OCI-LY7 (cell line): ENCODE measurements at regions of chr5 and their contacts with region 1.

Region 1: GRCh38 chr5:140557136-140557805 is at the start of gene SRA1:
- DNase-seq: peak; percentile 89
- H3K4me3 ChIP-seq: peak within 1 kb of the TSS; percentile 82
- H3K27ac ChIP-seq: peak within 1 kb of the TSS; percentile 46
- H3K4me1 ChIP-seq: peaks cover 23% of the 10 kb centered on the region
- CTCF ChIP-seq: no peak
- total RNA-seq, gene SRA1: 18.8 and 19.1 TPM in 2 replicates

Region 2: DNA sequence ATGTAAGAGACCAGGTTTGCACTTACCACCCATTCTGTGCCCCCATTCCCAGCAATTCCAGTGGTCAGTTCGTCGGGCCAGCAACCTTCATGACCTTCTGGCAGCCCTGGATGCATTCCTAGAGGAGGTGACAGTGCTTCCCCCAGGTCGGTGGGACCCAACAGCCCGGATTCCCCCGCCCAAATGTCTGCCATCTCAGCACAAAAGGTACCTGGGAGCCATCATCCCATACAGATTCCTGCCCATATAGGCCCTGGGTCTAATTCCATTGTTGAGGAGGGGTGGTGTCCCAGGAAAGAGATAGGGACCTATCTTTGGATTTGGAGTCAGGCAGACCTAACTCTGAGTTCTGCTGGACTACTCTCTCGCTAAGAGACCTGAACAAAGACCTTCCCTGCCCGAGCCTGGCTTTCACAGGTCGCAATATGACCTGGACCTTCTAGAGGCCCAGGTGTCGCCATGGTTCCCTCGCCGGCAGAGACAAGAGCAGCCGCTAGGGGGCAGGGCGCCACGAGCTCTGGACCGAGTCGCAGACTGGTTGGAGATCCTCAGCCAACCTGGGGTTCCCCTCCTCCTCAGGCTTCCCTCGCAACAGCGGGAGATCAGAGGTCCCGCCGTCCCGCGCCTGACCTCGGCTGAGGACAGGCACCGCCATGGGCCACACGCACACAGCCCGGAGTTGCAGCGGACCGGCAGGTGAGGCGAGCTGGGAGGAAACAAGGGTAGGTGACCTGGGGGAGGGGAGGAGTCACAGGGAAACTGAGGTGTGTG is 194.2 kb before region 1 on chr5:
- CTCF ChIA-PET with region 1: no interaction called
- POLR2A ChIA-PET with region 1: no interaction called
- intact Hi-C with region 1: loop called (anchors 10 kb)
- DNase-seq: peak; percentile 78
- H3K4me3 ChIP-seq: peak overlapping the region; percentile 42
- H3K27ac ChIP-seq: no peak overlapping the region
- H3K4me1 ChIP-seq: peaks cover 3% of the 10 kb centered on the region
- CTCF ChIP-seq: peak; percentile 94

Region 3: DNA sequence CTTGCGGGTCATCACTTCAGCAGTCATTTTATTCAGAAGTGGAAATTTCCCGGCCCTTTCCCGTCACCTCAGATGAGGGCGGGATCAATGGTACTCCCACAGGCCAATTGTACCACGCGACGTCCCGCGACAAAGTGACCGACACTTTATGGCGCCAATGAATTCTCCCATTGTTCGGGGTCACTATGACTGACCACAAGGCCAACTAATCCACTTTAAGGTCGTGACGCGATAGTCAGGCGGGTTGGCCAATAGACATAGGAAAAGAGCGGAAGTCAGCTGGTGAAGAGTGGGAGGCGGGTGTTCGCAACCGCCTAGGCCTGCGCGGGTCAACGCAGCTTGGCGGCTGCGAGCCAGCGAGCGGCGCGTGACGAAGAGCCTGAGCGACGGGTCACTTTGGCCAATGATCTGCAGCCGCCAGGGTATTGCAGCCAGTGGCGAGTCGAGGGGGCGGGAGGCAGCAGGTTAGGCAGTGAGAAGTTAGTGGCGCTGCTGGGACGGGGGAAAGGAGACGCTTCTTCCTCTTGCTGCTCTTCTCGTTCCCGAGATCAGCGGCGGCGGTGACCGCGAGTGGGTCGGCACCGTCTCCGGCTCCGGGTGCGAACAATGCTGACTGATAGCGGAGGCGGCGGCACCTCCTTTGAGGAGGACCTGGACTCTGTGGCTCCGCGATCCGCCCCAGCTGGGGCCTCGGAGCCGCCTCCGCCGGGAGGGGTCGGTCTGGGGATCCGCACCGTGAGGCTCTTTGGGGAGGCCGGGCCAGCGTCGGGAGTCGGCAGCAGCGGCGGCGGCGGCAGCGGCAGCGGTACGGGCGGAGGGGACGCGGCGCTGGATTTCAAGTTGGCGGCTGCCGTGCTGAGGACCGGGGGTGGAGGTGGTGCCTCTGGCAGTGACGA is 155.7 kb before region 1 on chr5 and contains the start of gene ANKHD1:
- CTCF ChIA-PET with region 1: no interaction called
- POLR2A ChIA-PET with region 1: no interaction called
- intact Hi-C with region 1: loop called (anchors 2 kb)
- DNase-seq: peak; percentile 100
- H3K4me3 ChIP-seq: peak within 1 kb of the TSS; percentile 92
- H3K27ac ChIP-seq: peak within 1 kb of the TSS; percentile 82
- H3K4me1 ChIP-seq: peaks cover 29% of the 10 kb centered on the region
- CTCF ChIP-seq: no peak
- total RNA-seq, gene ANKHD1: 90.6 and 91.5 TPM in 2 replicates